Head of caudate nucleus (tissue), 42 donors: ENCODE measurements at regions of chr3 and their contacts with region 1.

Region 1: GRCh38 chr3:15205934-15206661 is at the start of gene CAPN7:
- DNase-seq: peak; percentile 81 to 97 (median 94)

Region 2: GRCh38 chr3:15098503-15099363 is 107.4 kb before region 1 on chr3 and contains the start of gene RBSN:
- intact Hi-C with region 1: loop called (anchors 5 kb)
- DNase-seq: peak; percentile 90 to 99 (median 97)

Region 3: GRCh38 chr3:15256861-15257341 is 50.8 kb after region 1 on chr3:
- intact Hi-C with region 1: loop called (anchors 5 kb)
- DNase-seq: no peak

Region 4: GRCh38 chr3:15377961-15378791 is 172.1 kb after region 1 on chr3:
- intact Hi-C with region 1: loop called (anchors 5 kb)
- DNase-seq: peak; percentile 89 to 99 (median 97)

Region 5: DNA sequence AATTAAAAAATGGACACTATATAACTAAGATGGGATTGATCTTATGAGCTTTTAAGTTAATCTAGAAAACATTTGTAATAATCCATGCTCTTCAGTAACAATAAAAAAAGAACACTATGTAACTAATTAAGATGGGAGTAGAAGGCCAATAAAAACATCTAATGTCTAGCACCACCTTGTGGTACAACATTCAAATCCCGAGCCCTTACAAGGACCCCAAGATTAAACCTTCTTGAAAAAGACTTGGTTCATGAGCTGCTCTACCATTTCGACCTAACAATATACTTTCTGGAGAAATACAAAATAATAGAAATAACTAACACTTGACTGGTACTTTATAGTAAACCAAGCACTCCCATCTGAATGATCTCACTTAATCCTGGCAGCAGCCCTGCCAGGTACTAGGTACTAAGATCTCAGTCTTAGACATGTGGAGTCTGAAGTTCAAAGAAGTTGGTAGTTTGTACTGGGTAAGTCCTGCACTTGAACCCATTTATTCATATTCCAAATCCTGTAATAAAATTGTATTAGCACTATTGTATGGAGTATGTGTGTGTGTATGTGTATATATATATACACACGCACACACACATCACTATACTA is 199.5 kb after region 1 on chr3:
- intact Hi-C with region 1: loop called (anchors 10 kb)
- DNase-seq: peak in 7 of 42 donors; percentile 13 to 48 (median 21)

Region 6: GRCh38 chr3:15557511-15557946 is 351.4 kb after region 1 on chr3:
- intact Hi-C with region 1: loop called (anchors 5 kb)
- DNase-seq: peak in 17 of 42 donors; percentile 9 to 60 (median 30)